Lower leg skin (tissue), 4 donors: ENCODE measurements at regions of chr11 and their contacts with region 1.

Region 1: DNA sequence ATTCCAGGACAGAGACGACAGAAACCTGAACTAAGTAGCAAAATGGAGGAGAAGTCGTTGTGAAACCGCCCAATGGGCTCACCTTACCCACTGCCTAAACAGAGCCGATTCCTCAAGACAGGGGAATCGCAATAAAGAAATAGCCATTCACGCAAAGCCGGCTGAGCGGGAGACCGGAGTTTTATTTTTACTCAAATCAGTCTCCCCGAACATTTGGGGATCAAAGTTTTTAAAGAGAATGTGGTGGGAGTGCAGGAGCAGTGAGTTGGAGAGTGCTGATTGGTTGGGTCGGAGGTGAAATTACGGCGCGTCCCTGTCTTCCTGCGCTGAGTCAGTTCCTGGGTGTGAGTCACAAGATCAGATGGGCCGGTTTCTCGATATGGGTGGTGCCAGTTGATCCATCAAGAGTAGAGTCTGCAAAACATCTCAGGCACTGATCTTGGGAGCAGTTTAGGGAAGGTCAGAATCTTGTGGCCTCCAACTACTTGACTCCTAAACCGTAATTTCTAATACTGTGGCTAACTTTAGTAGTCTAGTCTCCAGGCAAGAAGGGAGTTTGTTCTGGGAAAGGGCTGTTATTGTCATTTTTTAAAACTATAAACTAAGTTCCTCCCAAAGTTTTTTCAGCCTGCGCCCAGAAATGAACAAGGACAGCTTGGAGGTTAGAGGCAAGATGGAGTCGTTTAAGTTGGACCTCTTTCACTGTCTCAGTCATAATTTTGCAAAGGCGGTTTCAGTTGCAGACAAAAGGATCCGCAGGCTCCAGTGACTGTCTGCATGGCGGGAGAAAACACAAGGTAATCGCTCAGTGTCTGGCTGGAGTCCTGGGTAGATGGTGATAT is 34.1 kb downstream of the OR4D9 start:
- DNase-seq: no peak
- H3K4me3 ChIP-seq: no peak overlapping the region
- CTCF ChIP-seq: no peak
- POLR2A ChIP-seq: no peak

Region 2: DNA sequence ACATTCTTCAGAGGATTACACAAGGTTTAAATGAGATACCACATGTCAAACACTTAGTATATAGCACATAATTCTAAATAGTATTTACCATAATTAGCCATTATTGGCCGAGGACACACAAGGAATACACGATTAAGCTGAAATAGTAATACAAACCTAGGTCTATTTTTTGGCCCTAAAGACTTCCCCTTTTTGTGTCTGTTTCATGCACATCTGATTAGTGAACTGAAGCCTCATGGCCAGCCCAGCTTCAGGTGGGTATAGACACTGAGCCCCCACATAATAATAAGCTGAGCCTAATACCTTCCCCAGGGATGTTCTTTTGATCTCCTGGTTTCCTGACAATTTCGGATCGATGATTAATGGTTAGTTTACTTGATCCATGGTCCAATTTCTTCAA is 457.2 kb before region 1 on chr11:
- intact Hi-C with region 1: no loop called
- DNase-seq: no peak
- H3K4me3 ChIP-seq: no peak overlapping the region
- CTCF ChIP-seq: no peak
- POLR2A ChIP-seq: no peak

Region 3: DNA sequence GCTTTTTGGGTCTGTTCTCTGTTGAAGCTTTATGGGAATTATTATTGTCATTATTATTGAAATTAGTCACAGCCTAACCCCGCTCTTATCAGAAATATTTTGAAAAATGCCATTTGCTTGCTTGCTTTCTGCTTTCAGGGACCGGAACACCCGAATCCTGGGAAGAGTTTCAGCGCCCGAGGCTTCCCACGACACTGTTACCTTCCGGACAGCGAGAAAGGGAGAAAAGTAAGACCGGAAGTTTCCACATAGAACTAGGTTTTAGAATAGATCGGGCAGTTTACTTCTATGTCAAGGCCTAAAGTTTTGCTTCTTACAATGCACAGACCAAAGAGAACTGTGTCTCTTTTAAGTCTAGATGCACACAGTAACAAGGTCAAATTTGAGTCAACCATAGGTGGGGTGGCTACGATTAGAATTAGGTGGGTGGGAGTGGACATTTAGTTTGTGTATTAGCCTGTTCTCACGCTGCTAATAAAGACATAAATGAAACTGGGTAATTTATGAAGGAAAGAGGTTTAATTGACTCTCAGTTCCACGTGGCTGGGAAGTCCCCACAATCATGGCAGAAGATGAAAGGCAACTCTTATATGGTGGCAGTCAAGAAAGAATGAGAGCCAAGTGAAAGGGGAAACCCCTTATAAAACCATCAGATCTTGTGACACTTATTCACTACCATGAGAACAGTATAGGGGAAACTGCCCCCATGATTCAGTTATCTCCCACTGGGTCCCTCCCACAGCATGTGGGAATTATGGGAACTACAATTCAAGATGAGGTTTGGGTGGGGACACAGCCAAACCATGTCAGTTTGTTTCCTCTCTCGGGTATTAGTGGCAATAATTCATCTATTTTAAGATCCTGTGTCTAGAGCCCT is 345.6 kb before region 1 on chr11:
- intact Hi-C with region 1: loop called (anchors 5 kb)
- DNase-seq: no peak
- H3K4me3 ChIP-seq: no peak overlapping the region
- CTCF ChIP-seq: no peak
- POLR2A ChIP-seq: no peak

Region 4: DNA sequence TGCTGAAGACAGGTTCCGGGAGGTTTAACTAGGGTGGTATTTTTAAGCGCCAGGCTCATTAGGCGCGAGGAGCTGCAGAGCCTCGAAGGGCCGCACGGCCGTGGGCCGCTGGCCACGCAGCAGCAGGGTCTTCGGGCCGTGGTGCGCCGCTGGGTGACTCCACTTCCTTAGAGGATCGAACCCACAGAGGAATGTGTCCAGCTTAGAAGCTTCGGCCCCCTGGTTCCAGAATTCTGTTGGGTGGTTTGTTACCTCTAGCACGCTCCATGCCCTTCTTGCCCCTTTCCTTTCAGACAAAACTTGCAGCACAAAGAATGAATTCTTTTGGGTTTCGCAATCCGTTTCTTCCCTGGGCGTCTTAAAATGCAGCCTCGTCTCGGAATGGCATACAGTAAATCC is 124.2 kb after region 1 on chr11:
- intact Hi-C with region 1: loop called (anchors 10 kb)
- DNase-seq: peak; percentile 31 to 89
- H3K4me3 ChIP-seq: peak overlapping the region; percentile 41
- CTCF ChIP-seq: no peak
- POLR2A ChIP-seq: no peak